ENCODE measurements at regions of chr12 and their contacts with region 1.

Region 1: GRCh38 chr12:10153271-10154144 is 18.4 kb downstream of the OLR1 start:
- DNase-seq: peak; percentile 21
- ATAC-seq: peak; percentile 81
- H3K4me3 ChIP-seq: peak overlapping the region; percentile 23 to 38; a peak in 3 of 4 replicates
- H3K27ac ChIP-seq: peak overlapping the region; percentile 4; the same call in 1 of the 2 replicates
- H3K4me1 ChIP-seq: peaks cover 0 to 5% of the 10 kb centered on the region in 2 experiments; a peak in 1 of 4 replicates
- H3K27me3 ChIP-seq: no peaks in the 10 kb centered on the region
- CTCF ChIP-seq: peak; percentile 65 to 78 (median 74)
- POLR2A ChIP-seq: no peak
- RAD21 ChIP-seq: peak; percentile 65

Region 2: DNA sequence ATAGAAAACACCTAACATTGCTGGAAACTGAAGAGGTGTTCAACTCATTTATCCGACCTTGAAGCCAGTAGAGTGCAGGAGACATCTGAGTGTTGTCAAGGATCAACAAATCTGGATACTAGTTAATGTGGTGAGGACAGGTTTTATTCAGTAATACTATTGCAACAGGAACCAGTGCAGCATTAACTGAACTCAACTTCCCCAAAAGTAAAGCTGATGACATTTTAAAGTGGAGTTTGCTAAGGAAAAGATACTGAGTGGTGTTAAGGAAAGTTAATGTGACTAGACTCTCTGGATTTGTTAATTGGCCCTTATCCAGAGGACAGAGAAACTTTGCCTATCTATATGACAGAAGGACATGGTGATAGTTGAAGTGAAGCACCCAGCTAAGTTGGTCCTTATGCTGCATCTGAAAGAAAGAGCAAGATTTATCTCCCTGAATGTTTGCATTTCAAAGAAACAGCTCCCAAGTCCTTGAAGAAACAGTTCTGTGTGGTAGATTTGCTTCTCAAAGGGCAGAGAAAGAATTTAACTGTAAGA is 22.3 kb before region 1 on chr12:
- CTCF ChIA-PET with region 1: no interaction called
- POLR2A ChIA-PET with region 1: no interaction called
- RAD21 ChIA-PET with region 1: no interaction called
- intact Hi-C with region 1: no loop called
- DNase-seq: no peak
- ATAC-seq: no peak
- H3K4me3 ChIP-seq: no peak overlapping the region
- H3K27ac ChIP-seq: no peak overlapping the region
- H3K4me1 ChIP-seq: peaks cover 0 to 3% of the 10 kb centered on the region in 2 experiments; a peak in 1 of 4 replicates
- H3K27me3 ChIP-seq: peaks cover 11% of the 10 kb centered on the region
- CTCF ChIP-seq: no peak
- POLR2A ChIP-seq: no peak
- RAD21 ChIP-seq: no peak

Region 3: GRCh38 chr12:10190558-10191388 is 37.3 kb after region 1 on chr12:
- CTCF ChIA-PET with region 1: interaction called, 11 read pairs
- POLR2A ChIA-PET with region 1: no interaction called
- RAD21 ChIA-PET with region 1: no interaction called
- intact Hi-C with region 1: loop called (anchors 1 kb)
- DNase-seq: peak; percentile 56
- ATAC-seq: peak; percentile 98
- H3K4me3 ChIP-seq: no peak overlapping the region
- H3K27ac ChIP-seq: no peak overlapping the region
- H3K4me1 ChIP-seq: peaks cover 4 to 20% of the 10 kb centered on the region in 2 experiments; a peak in 3 of 4 replicates
- H3K27me3 ChIP-seq: no peaks in the 10 kb centered on the region
- CTCF ChIP-seq: peak; percentile 59 to 83 (median 76)
- POLR2A ChIP-seq: no peak
- RAD21 ChIP-seq: peak; percentile 62

Measured in HCT116 (cell line).